GM18951 (cell line): ENCODE measurements at regions of chr2 and their contacts with region 1.

Region 1: DNA sequence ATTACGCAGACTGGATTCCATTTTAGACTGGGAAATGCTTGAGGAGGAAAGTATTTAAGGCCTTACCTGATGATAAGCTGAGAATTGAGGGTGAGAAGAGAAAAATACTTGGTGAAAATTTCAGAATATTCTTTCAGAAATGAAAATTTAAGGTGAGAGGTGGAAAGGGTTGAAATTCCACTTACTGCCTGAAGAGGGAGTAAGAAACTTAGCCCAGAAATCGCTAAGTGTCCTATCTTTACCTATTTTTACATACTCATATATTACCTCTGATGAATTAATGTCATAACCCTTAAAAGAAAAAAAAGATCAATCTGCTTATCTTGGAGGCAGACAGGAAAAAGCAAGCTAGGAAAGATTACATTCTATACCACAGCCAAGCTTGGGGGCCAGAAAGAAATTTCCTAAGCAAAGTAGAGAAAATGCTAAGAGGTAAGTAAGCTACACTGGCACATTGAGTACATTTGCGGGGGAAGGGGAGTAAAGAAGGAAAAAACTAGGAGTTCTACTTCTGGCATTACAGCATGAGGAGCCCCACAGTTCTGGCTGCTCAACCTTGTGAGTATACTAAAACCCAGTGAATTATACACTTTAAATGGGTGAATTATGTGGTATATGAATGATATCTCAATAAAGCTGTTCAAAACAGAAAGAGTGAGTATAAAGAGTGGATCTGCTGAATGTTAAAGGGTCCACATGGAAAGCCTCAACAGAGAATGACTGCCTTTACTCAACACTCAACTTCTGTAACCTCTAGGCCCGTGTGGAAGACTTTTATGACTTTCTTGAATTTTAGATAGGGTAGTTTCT is 33.8 kb downstream of the SMC6 start:
- POLR2A ChIP-seq: no peak

Region 2: GRCh38 chr2:17830053-17831034 is 110.6 kb after region 1 on chr2:
- in situ Hi-C with region 1: loop called (anchors 10 kb)
- POLR2A ChIP-seq: no peak